Activated T-helper 1 cell treated with anti-CD3 and anti-CD28 coated beads, Interleukin-12 subunit alpha, Interleukin-12 subunit beta, Interleukin-2, Interleukin-4 antibody, amounts not matched to agents 30 ng/mL and 10 ng/mL and 1 ng/mL, durations not matched to agents 14 hours and 24 hours and 36 hours (primary cell): ENCODE measurements at regions of chr12 and their contacts with region 1.

Region 1: GRCh38 chr12:6607751-6608591 is 792 bp upstream of the CHD4 start:
- DNase-seq: peak; percentile 51
- H3K4me3 Mint-ChIP-seq: no peak overlapping the region
- H3K27ac Mint-ChIP-seq: no peak overlapping the region
- H3K4me1 Mint-ChIP-seq: peaks cover 47% of the 10 kb centered on the region
- H3K27me3 Mint-ChIP-seq: no peaks in the 10 kb centered on the region

Region 2: GRCh38 chr12:6347367-6348337 is 260.3 kb before region 1 on chr12:
- intact Hi-C with region 1: no loop called
- DNase-seq: no peak
- H3K4me3 Mint-ChIP-seq: no peak overlapping the region
- H3K27ac Mint-ChIP-seq: no peak overlapping the region
- H3K4me1 Mint-ChIP-seq: peaks cover 42% of the 10 kb centered on the region
- H3K27me3 Mint-ChIP-seq: no peaks in the 10 kb centered on the region

Region 3: GRCh38 chr12:6470375-6471163 is 137.4 kb before region 1 on chr12 and contains the start of gene VAMP1:
- intact Hi-C with region 1: loop called (anchors 2 kb)
- DNase-seq: peak; percentile 97
- H3K4me3 Mint-ChIP-seq: peak within 1 kb of the TSS; percentile 93
- H3K27ac Mint-ChIP-seq: peak within 1 kb of the TSS; percentile 85
- H3K4me1 Mint-ChIP-seq: peaks cover 57% of the 10 kb centered on the region
- H3K27me3 Mint-ChIP-seq: peaks cover 1% of the 10 kb centered on the region
- total RNA-seq, gene VAMP1: 49.7 and 52.8 TPM in 2 replicates

Region 4: DNA sequence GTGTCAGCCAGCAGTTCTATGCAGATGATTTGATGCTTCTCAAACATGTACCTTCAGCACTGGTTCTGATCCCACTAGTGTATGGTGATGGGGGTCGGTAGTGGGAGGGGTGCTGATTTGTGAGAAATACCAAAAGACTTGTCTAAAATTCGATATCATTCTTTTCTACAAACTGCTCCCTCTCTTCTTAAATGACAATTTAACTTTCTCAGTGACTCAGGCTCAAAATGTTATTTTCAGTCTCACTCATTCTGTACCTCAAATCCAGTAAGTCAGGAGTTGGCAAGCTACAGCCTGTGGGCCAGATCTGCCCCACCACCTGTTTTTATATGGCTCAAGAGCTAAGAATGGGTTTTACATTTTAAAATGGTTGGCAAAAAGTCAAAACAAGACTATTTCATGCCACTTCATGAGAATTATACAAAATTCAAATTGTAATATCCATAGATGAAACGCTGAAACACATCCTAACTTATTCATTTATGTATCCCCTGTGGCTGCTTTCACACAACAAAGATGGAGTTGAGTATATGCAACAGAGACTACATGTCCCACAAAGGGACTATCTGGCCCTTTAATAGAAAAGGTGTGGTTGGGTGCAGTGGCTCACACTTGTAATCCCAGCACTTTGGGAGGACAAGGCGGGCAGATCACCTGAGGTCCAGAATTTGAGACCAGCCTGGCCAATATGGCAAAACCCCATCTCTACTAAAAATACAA is 33.2 kb before region 1 on chr12:
- intact Hi-C with region 1: loop called (anchors 2 kb)
- DNase-seq: no peak
- H3K4me3 Mint-ChIP-seq: no peak overlapping the region
- H3K27ac Mint-ChIP-seq: peak overlapping the region; percentile 66
- H3K4me1 Mint-ChIP-seq: peaks cover 26% of the 10 kb centered on the region
- H3K27me3 Mint-ChIP-seq: no peaks in the 10 kb centered on the region

Region 5: DNA sequence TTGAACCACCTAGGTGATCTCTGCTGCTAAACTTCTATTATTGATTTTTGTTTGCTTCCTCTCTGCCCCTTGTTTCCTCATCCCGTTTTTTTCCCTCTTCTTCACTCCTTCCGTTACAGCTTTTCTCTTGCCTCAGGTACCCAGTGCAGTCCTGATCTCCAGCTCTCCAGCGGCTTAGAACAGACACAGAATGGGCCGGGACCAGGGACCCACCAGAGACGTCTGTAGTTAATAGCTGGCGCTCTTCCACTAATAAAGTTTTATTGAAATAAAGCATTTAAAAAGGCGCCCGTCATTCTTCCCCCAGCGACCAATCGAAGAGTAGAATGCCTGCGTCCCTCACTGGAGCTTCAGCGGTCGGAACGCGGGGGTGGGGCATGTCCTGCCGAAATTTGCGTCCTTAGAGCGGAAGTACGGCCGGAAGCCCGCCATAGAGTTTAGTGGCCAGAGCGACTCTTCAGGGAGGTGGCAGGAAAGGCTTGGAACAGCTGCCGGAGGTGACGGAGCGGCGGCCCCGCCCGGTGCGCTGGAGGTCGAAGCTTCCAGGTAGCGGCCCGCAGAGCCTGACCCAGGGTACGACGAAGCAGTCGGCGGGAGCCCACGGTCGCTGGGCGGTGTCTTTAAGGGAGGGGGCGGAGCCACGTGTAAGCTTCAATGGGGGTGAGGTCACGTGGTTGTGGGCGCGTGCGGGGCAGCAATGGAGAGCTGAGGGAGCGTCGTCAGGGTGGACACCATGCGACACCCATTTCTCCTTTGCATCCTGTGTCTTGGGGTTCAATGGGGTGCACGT is 115.8 kb after region 1 on chr12 and contains the start of gene COPS7A:
- intact Hi-C with region 1: loop called (anchors 1 kb)
- DNase-seq: peak; percentile 98
- H3K4me3 Mint-ChIP-seq: peak within 1 kb of the TSS; percentile 92
- H3K27ac Mint-ChIP-seq: peak within 1 kb of the TSS; percentile 91
- H3K4me1 Mint-ChIP-seq: peaks cover 33% of the 10 kb centered on the region
- H3K27me3 Mint-ChIP-seq: no peaks in the 10 kb centered on the region
- total RNA-seq, gene COPS7A: 34.6 and 36.2 TPM in 2 replicates

Region 6: GRCh38 chr12:6792522-6793201 is 184.7 kb after region 1 on chr12:
- intact Hi-C with region 1: loop called (anchors 2 kb)
- DNase-seq: peak; percentile 40
- H3K4me3 Mint-ChIP-seq: peak overlapping the region; percentile 94
- H3K27ac Mint-ChIP-seq: peak overlapping the region; percentile 87
- H3K4me1 Mint-ChIP-seq: peaks cover 65% of the 10 kb centered on the region
- H3K27me3 Mint-ChIP-seq: no peaks in the 10 kb centered on the region

Region 7: DNA sequence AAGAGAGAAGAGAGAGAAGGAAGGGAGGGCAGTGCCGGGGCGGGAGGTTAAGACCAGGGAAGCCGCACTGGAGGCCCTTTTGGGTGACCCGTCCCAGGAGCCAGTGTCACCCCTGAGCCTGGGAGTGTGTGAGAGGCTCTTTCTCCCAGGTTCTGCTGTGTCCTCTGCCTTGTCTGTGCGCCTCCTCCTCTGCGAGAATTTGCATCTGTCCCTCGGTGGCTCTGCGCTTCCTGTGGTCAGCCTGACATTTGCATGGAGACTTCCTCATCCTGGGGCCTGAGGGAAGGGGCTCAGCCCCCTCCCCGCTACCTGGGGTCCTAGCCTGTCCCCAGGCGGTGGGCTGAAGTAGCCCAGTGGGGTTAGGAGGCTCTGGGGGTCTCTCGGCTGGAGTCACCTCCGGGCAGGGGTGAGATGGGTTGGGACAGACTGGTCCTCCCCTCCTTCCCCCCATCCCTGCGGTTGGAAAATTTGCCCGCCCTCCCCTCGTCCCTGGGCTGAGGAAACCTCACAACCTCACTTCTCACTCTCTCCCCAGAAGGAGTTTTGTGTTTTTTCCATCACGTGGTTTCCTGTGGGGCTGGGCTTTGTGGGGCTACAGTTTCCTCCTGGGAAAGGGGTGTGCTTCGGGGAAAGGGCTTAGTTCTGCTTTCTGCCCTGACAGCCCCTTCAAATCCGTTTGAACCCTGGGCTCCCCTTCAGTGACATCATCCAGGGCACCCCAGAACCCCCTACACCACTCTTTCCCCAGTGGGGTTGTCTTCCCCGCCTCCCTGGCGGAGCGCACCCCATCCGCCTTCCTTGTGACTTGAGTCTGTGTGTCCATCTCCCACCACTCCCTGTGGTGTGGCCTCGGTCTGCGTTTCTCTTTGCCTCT is 345.7 kb after region 1 on chr12:
- intact Hi-C with region 1: loop called (anchors 5 kb)
- DNase-seq: peak; percentile 79
- H3K4me3 Mint-ChIP-seq: peak overlapping the region; percentile 98
- H3K27ac Mint-ChIP-seq: peak overlapping the region; percentile 97
- H3K4me1 Mint-ChIP-seq: peaks cover 80% of the 10 kb centered on the region
- H3K27me3 Mint-ChIP-seq: no peaks in the 10 kb centered on the region